ENCODE measurements at regions of chr13 and their contacts with region 1.

Region 1: GRCh38 chr13:103130681-103131210 is 64.5 kb upstream of the SLC10A2 start:
- DNase-seq: no peak
- H3K4me3 ChIP-seq: no peak overlapping the region
- H3K27ac ChIP-seq: no peak overlapping the region
- H3K4me1 ChIP-seq: no peaks in the 10 kb centered on the region
- H3K27me3 ChIP-seq: no peaks in the 10 kb centered on the region
- CTCF ChIP-seq: no peak

Region 2: GRCh38 chr13:102913914-102914313 is 216.8 kb before region 1 on chr13:
- intact Hi-C with region 1: loop called (anchors 10 kb)
- DNase-seq: no peak
- H3K4me3 ChIP-seq: no peak overlapping the region
- H3K27ac ChIP-seq: no peak overlapping the region
- H3K4me1 ChIP-seq: no peaks in the 10 kb centered on the region
- H3K27me3 ChIP-seq: no peaks in the 10 kb centered on the region
- CTCF ChIP-seq: no peak

Measured in colonic mucosa (tissue), 4 donors.